ENCODE measurements at regions of chr19 and their contacts with region 1.

Region 1: GRCh38 chr19:17266975-17267788 is at the start of gene BABAM1:
- DNase-seq: peak; percentile 99
- ATAC-seq: peak; percentile 97
- H3K4me3 ChIP-seq: peak within 1 kb of the TSS; percentile 97
- H3K27ac ChIP-seq: peak within 1 kb of the TSS; percentile 42
- H3K4me1 ChIP-seq: peaks cover 7% of the 10 kb centered on the region
- H3K27me3 ChIP-seq: no peaks in the 10 kb centered on the region
- CTCF ChIP-seq: no peak
- total RNA-seq, gene BABAM1: 196 and 214 TPM in 2 replicates

Region 2: GRCh38 chr19:17170538-17171297 is 96.5 kb before region 1 on chr19:
- CTCF ChIA-PET with region 1: no interaction called
- POLR2A ChIA-PET with region 1: interaction called, 10 read pairs
- intact Hi-C with region 1: no loop called
- DNase-seq: no peak
- ATAC-seq: no peak
- H3K4me3 ChIP-seq: no peak overlapping the region
- H3K27ac ChIP-seq: no peak overlapping the region
- H3K4me1 ChIP-seq: peaks cover 11% of the 10 kb centered on the region
- H3K27me3 ChIP-seq: no peaks in the 10 kb centered on the region
- CTCF ChIP-seq: no peak

Region 3: DNA sequence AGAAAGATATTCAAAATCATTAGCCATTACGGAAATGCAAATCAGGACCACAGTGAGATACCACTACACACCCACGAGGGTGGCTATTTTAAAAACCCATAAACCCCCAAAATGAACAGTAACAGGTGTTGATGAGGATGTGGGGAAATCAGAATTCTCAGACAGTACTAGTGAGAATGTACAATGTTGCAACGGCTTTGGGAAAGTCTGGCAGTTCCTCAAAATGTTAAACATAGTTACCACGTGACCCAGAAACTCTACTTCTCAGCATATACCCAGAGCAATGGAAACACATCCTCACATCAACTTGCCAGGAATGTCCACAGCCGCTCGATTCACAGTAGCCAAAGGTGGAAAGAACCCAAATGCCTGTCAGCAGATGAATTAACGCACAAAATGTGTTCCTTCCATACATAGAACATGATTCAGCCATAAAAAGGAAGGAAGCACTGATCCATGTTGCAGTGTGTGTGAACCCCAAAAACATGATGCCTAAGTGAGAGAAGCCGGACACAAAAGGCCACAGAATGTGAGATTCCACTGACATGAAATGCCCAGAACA is 102.9 kb after region 1 on chr19:
- CTCF ChIA-PET with region 1: interaction called, 13 read pairs
- POLR2A ChIA-PET with region 1: no interaction called
- intact Hi-C with region 1: no loop called
- DNase-seq: no peak
- ATAC-seq: no peak
- H3K4me3 ChIP-seq: no peak overlapping the region
- H3K27ac ChIP-seq: no peak overlapping the region
- H3K4me1 ChIP-seq: no peaks in the 10 kb centered on the region
- H3K27me3 ChIP-seq: no peaks in the 10 kb centered on the region
- CTCF ChIP-seq: no peak

Region 4: GRCh38 chr19:17414097-17414496 is 146.9 kb after region 1 on chr19:
- CTCF ChIA-PET with region 1: no interaction called
- POLR2A ChIA-PET with region 1: no interaction called
- intact Hi-C with region 1: no loop called
- DNase-seq: no peak
- ATAC-seq: no peak
- H3K4me3 ChIP-seq: no peak overlapping the region
- H3K27ac ChIP-seq: no peak overlapping the region
- H3K4me1 ChIP-seq: peaks cover 6% of the 10 kb centered on the region; the same call in 1 of the 2 replicates
- H3K27me3 ChIP-seq: no peaks in the 10 kb centered on the region
- CTCF ChIP-seq: no peak

Measured in PC-3 (cell line).